GM13976 (cell line): ENCODE measurements at regions of chr10 and their contacts with region 1.

Region 1: DNA sequence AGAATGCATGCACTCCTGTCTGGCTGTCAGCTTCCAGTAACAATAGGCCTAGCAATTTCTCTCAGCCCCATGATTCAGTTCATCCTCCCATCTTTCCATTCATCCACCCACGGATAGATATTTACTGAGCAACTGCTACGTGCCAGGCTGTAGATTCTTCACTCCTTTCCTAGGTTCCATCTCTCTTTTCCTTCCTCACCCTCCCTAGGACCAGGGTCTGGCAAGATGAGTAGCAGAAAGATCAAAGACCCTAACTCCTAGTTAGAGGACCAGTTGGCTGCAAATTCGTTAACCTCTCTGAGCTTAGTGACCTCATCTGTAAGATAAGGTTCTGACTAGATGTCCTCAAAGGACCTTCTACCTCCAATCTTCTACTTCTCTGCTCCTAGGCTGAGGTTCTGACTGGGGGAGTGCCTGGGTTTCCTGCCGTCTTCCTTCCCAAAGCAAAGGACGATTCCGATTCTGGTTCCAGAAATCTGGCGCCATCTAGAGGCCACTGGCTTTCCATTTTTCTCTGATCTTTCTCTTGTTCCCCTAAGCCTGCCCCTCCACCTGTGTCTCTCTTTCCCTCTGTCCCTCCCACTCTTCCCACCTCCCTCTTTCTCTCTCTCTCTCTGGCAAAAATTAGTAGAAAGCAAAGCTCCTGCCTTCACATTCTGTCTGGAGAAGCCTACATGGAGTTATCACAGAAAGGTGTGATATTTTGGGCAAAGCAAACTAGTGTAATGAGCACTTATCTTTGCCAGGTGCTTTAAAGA is 26.2 kb downstream of the TBATA start:
- DNase-seq: peak; percentile 79
- CTCF ChIP-seq: peak; percentile 75

Region 2: GRCh38 chr10:70461215-70461986 is 297.5 kb before region 1 on chr10:
- in situ Hi-C with region 1: loop called (anchors 25 kb)
- DNase-seq: peak; percentile 84
- CTCF ChIP-seq: peak; percentile 79

Region 3: GRCh38 chr10:70549962-70550458 is 208.9 kb before region 1 on chr10:
- in situ Hi-C with region 1: loop called (anchors 10 kb)
- DNase-seq: peak; percentile 85
- CTCF ChIP-seq: peak; percentile 80

Region 4: GRCh38 chr10:71033396-71033980 is 274.6 kb after region 1 on chr10:
- in situ Hi-C with region 1: no loop called
- DNase-seq: no peak
- CTCF ChIP-seq: no peak